Heart left ventricle (tissue), 16 donors: ENCODE measurements at regions of chr12 and their contacts with region 1.

Region 1: GRCh38 chr12:46944088-46944487 is 118.3 kb upstream of the SLC38A4 start:
- DNase-seq: no peak
- ATAC-seq: peak in 1 of 4 donors; percentile 49
- H3K4me3 ChIP-seq: no peak overlapping the region
- H3K27ac ChIP-seq: no peak overlapping the region
- H3K4me1 ChIP-seq: no peaks in the 10 kb centered on the region
- H3K27me3 ChIP-seq: no peaks in the 10 kb centered on the region
- CTCF ChIP-seq: peak in 5 of 12 donors; percentile 17 to 27 (median 22)
- POLR2A ChIP-seq: no peak

Region 2: GRCh38 chr12:45852508-45852907 is 1091.6 kb before region 1 on chr12:
- intact Hi-C with region 1: no loop called
- DNase-seq: peak in 4 of 5 donors; percentile 36 to 50 (median 44)
- ATAC-seq: peak; percentile 86 to 93 (median 88)
- H3K4me3 ChIP-seq: no peak overlapping the region
- H3K27ac ChIP-seq: peak overlapping the region in 4 of 12 donors; percentile 13 to 73 (median 48)
- H3K4me1 ChIP-seq: peaks cover 0 to 23% (median 11%) of the 10 kb centered on the region in 12 donors
- H3K27me3 ChIP-seq: no peaks in the 10 kb centered on the region
- CTCF ChIP-seq: no peak
- POLR2A ChIP-seq: no peak

Region 3: DNA sequence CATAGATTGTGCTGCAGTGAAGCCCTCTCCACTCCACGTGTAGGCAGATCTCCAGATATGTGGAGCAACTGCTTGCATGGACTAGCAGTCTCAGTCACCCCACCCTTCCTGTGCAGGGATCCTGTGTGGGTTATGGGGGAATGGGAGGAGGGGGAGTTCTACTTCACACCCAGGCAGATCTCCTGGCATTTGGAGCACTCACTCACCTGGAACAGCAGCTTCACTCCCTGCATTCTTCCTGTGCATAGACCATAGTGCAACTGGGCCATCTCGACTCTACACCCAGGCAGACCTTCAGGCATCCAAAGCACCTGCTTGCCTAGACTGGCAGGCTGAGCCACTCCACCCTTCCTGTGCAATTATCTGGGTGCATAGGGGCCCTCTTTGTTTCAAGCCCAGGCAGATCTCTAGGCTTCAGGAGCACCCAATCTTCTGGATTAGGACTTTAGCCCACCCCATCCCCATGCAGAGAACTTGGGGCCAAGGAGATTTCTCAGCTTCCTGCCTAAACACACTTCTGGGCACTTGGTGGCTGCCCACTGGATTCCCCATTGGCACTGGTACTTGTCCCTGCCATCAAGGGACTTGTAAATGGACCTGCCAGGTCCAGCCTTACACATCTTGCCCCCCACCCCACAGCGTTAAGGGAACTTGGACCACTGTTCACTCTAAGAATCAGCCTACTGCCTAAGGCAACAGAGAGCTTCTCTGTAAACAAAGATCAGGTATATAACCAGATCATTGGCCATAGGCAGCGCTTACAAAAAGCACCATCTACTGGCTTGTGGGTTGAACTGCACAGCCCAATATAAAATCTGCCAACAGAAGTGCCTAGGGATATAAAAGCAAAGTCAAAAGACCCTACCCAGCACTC is 39.5 kb after region 1 on chr12:
- intact Hi-C with region 1: loop called in 2 of 10 experiments (anchors 5 kb)
- DNase-seq: no peak
- ATAC-seq: peak in 3 of 4 donors; percentile 68 to 75 (median 70)
- H3K4me3 ChIP-seq: no peak overlapping the region
- H3K27ac ChIP-seq: no peak overlapping the region
- H3K4me1 ChIP-seq: peaks cover 0 to 3% (median 0%) of the 10 kb centered on the region in 12 donors
- H3K27me3 ChIP-seq: no peaks in the 10 kb centered on the region
- CTCF ChIP-seq: peak; percentile 49 to 78 (median 66)
- POLR2A ChIP-seq: no peak

Region 4: DNA sequence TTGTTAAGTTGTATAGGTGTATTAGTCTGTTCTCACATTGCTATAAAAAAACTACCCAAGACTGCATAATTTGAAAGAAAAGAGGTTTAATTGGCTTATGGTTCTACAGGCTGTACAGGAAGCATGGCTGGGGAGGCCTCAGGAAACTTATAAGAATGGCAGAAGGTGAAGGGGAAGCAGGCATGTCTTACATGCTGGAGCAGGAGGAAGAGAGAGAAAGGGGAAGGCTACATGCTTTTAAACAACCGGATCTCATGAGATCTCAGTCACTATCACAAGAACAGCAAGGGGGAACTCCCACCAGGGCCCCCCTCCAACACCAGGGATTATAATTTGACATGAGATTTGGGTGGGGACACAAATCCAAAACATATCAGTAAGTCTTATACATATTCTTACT is 1319.5 kb after region 1 on chr12:
- intact Hi-C with region 1: no loop called
- DNase-seq: no peak
- ATAC-seq: no peak
- H3K4me3 ChIP-seq: no peak overlapping the region
- H3K27ac ChIP-seq: no peak overlapping the region
- H3K4me1 ChIP-seq: no peaks in the 10 kb centered on the region
- H3K27me3 ChIP-seq: no peaks in the 10 kb centered on the region
- CTCF ChIP-seq: no peak
- POLR2A ChIP-seq: no peak